ENCODE measurements at regions of chr2 and their contacts with region 1.

Region 1: DNA sequence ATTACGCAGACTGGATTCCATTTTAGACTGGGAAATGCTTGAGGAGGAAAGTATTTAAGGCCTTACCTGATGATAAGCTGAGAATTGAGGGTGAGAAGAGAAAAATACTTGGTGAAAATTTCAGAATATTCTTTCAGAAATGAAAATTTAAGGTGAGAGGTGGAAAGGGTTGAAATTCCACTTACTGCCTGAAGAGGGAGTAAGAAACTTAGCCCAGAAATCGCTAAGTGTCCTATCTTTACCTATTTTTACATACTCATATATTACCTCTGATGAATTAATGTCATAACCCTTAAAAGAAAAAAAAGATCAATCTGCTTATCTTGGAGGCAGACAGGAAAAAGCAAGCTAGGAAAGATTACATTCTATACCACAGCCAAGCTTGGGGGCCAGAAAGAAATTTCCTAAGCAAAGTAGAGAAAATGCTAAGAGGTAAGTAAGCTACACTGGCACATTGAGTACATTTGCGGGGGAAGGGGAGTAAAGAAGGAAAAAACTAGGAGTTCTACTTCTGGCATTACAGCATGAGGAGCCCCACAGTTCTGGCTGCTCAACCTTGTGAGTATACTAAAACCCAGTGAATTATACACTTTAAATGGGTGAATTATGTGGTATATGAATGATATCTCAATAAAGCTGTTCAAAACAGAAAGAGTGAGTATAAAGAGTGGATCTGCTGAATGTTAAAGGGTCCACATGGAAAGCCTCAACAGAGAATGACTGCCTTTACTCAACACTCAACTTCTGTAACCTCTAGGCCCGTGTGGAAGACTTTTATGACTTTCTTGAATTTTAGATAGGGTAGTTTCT is 33.8 kb downstream of the SMC6 start:
- DNase-seq: no peak
- H3K4me3 Mint-ChIP-seq: no peak overlapping the region
- H3K27ac Mint-ChIP-seq: no peak overlapping the region
- H3K4me1 Mint-ChIP-seq: no peaks in the 10 kb centered on the region
- H3K27me3 Mint-ChIP-seq: no peaks in the 10 kb centered on the region

Region 2: DNA sequence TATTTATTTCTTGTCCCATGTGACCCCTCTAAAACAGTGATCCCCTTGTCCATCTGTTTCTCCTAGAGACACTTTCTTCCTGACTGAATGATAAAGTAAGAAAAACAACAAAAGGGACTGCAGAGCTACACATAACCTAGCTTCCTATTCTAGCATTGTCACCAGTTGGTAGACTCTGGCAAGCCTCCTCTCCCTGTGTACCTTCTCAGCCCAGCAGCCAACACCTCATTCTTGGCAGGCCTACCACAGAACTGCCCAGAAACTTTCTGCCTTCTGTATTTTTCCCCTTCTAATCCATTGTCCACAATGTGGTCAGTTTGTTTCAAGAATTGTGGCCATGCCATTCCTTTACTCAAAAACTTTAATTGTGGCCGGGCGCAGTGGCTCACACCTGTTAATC is 20.4 kb after region 1 on chr2:
- CTCF ChIA-PET with region 1: no interaction called
- intact Hi-C with region 1: no loop called
- DNase-seq: no peak
- H3K4me3 Mint-ChIP-seq: no peak overlapping the region
- H3K27ac Mint-ChIP-seq: no peak overlapping the region
- H3K4me1 Mint-ChIP-seq: no peaks in the 10 kb centered on the region
- H3K27me3 Mint-ChIP-seq: no peaks in the 10 kb centered on the region

Region 3: GRCh38 chr2:17753803-17754663 is 34.3 kb after region 1 on chr2 and contains the starts of genes GEN1 and SMC6:
- CTCF ChIA-PET with region 1: no interaction called
- intact Hi-C with region 1: loop called (anchors 1 kb)
- DNase-seq: peak; percentile 90
- H3K4me3 Mint-ChIP-seq: peak within 1 kb of the TSS; percentile 85
- H3K27ac Mint-ChIP-seq: peak within 1 kb of the TSS; percentile 96
- H3K4me1 Mint-ChIP-seq: peaks cover 31% of the 10 kb centered on the region
- H3K27me3 Mint-ChIP-seq: no peaks in the 10 kb centered on the region
- total RNA-seq, gene GEN1: 13.4 to 15.5 TPM
- total RNA-seq, gene SMC6: 21.6 to 22.8 TPM

Region 4: GRCh38 chr2:17830053-17831034 is 110.6 kb after region 1 on chr2:
- CTCF ChIA-PET with region 1: interaction called, 7 read pairs
- intact Hi-C with region 1: loop called (anchors 1 kb)
- DNase-seq: peak; percentile 64
- H3K4me3 Mint-ChIP-seq: no peak overlapping the region
- H3K27ac Mint-ChIP-seq: no peak overlapping the region
- H3K4me1 Mint-ChIP-seq: peaks cover 3% of the 10 kb centered on the region
- H3K27me3 Mint-ChIP-seq: peaks cover 31% of the 10 kb centered on the region

Region 5: DNA sequence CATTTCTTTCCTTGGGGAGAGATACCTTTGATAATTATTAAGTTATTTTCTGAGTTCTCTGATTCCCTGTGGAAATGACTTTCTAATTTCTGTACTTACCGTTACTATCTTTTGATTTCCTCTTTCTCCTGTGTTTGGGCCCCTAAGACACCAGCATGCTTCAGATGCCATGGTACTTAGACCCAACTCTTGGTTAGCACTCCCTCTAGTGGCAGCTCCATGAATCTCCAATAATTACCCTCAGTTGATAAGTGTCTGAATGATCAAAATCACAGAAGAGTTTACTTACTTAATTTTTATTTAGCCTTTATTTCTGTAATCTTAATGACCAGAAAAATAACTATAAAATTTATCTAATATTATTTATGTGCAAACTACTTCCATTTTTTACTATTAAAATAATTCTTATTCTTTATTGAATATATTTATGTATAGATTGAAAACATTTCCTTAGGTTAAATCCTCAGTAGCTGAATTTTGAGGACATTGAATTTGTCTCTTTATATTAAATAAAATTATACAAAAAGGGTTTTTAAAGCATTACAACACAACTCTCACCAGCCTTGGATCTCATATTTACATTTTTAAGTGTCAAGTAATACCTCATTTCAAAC is 459.1 kb after region 1 on chr2:
- CTCF ChIA-PET with region 1: interaction called, 5 read pairs
- intact Hi-C with region 1: loop called (anchors 5 kb)
- DNase-seq: peak; percentile 54
- H3K4me3 Mint-ChIP-seq: no peak overlapping the region
- H3K27ac Mint-ChIP-seq: no peak overlapping the region
- H3K4me1 Mint-ChIP-seq: no peaks in the 10 kb centered on the region
- H3K27me3 Mint-ChIP-seq: peaks cover 11% of the 10 kb centered on the region

Region 6: DNA sequence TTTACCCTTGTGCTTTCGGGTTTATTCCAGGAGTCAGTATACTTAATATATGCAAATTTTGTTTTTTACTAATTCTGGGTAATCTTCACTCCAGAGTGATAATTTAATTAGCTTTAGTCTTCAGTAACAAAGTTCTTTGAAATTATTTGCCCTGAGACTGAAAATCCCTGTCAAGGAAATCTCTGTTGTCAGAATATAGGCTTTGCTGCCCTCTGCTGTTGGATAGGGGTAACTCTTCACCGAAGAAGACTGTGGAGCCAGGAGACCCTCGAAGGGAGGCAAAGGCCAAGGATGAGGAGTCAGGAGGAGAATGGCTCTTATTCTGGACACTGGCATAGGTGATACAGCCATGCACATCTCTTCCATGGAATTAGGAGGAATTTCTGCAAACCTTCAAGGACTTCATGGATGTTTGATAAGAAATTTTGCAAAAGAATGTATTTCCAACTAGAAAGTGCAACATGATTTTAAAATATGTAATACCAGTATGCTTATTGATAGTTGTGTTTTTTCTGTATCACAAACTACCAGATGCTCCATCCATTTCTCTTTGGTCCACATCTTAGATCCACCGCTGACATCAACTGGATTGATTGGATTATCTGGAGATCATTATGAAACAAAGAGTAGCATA is 658.4 kb after region 1 on chr2:
- CTCF ChIA-PET with region 1: no interaction called
- intact Hi-C with region 1: loop called (anchors 1 kb)
- DNase-seq: peak; percentile 46
- H3K4me3 Mint-ChIP-seq: no peak overlapping the region
- H3K27ac Mint-ChIP-seq: no peak overlapping the region
- H3K4me1 Mint-ChIP-seq: no peaks in the 10 kb centered on the region
- H3K27me3 Mint-ChIP-seq: peaks cover 11% of the 10 kb centered on the region

Measured in activated naive CD4-positive, alpha-beta T cell treated with anti-CD3 and anti-CD28 coated beads for 36 hours (primary cell).